ENCODE measurements at regions of chr12 and their contacts with region 1.

Region 1: DNA sequence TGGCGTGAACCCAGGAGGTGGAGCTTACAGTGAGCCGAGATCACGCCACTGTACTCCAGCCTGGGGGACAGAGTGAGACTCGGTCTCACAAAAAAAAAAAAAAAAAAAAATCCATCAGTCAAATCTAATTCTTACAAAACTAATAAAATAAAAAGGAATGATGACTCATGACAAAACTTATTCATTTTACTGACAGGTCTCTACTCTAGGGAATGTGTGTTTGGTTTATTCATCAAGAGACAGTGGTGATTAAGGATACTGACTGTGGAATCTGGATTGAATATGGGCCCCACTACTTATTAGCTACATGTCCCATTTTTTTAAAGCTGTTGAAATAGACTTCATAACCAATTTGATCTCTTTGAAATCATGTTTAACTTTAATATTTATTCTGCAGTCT is 29.3 kb upstream of the GAS2L3 start:
- DNase-seq: no peak
- ATAC-seq: no peak
- H3K4me3 ChIP-seq: no peak overlapping the region
- H3K4me3 Mint-ChIP-seq: no peak overlapping the region
- H3K27ac ChIP-seq: no peak overlapping the region
- H3K27ac Mint-ChIP-seq: no peak overlapping the region
- H3K4me1 ChIP-seq: no peaks in the 10 kb centered on the region
- H3K4me1 Mint-ChIP-seq: no peaks in the 10 kb centered on the region
- H3K27me3 ChIP-seq: no peaks in the 10 kb centered on the region
- H3K27me3 Mint-ChIP-seq: peaks cover 2% of the 10 kb centered on the region
- CTCF ChIP-seq: no peak

Region 2: GRCh38 chr12:100101000-100101399 is 443.2 kb before region 1 on chr12:
- CTCF ChIA-PET with region 1: no interaction called
- POLR2A ChIA-PET with region 1: no interaction called
- intact Hi-C with region 1: loop called in 1 of 2 experiments (anchors 5 kb)
- DNase-seq: no peak
- ATAC-seq: no peak
- H3K4me3 ChIP-seq: no peak overlapping the region
- H3K4me3 Mint-ChIP-seq: no peak overlapping the region
- H3K27ac ChIP-seq: no peak overlapping the region
- H3K27ac Mint-ChIP-seq: no peak overlapping the region
- H3K4me1 ChIP-seq: no peaks in the 10 kb centered on the region
- H3K4me1 Mint-ChIP-seq: no peaks in the 10 kb centered on the region
- H3K27me3 ChIP-seq: no peaks in the 10 kb centered on the region
- H3K27me3 Mint-ChIP-seq: no peaks in the 10 kb centered on the region
- CTCF ChIP-seq: no peak

Region 3: DNA sequence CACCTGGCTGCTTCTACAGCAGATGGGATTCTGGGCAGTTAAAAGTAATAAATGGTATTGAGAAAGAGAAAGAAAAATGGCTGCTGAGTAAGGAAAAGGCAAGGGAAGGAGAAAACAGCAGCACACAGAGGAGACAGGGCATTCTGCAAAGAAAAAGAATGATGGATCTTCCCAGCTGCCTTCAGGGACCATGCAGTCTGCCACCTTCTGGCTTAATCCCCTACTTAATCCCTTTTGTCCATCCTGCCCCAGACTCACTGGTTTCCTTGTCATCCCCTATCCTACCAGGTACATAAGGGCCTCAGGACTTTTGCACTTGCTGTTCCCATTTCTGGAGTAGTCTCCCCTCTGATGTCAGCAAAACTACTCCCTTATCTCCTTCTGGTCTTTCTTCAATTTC is 136.9 kb after region 1 on chr12:
- CTCF ChIA-PET with region 1: no interaction called
- POLR2A ChIA-PET with region 1: no interaction called
- intact Hi-C with region 1: no loop called
- DNase-seq: no peak
- ATAC-seq: no peak
- H3K4me3 ChIP-seq: no peak overlapping the region
- H3K4me3 Mint-ChIP-seq: no peak overlapping the region
- H3K27ac ChIP-seq: no peak overlapping the region
- H3K27ac Mint-ChIP-seq: no peak overlapping the region
- H3K4me1 ChIP-seq: no peaks in the 10 kb centered on the region
- H3K4me1 Mint-ChIP-seq: no peaks in the 10 kb centered on the region
- H3K27me3 ChIP-seq: no peaks in the 10 kb centered on the region
- H3K27me3 Mint-ChIP-seq: peaks cover 7% of the 10 kb centered on the region
- CTCF ChIP-seq: no peak